ENCODE measurements at regions of chr4 and their contacts with region 1.

Region 1: DNA sequence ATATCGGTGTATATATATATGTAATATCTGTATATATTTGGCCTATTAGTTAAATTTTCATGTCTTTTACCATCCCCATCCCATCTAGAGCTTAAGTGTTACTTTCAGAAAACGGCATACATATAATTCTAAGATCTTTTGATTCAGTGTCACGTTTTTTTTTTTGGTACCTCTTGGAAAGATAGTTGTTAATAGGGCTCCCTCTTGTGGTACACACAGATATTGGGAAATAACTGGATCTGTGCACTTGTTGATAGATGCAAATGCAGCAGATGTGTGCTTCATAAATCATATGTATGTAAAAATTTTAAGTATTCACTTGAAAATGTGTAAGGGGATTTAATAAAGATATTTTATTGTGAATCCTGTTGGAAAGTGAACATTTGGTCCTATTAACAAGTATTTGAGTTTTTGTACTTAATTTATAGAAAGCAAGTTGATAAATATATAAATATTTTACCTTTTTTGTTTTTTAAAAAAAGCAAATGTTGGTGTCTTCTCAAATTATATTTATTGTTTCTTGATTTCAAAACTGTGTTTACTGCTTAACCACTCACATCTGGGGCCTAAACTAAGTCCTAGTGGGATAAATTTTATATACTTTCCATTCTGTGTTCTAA is 74.7 kb downstream of the PAQR3 start:
- DNase-seq: no peak
- H3K4me3 Mint-ChIP-seq: no peak overlapping the region
- H3K27ac Mint-ChIP-seq: no peak overlapping the region
- H3K4me1 Mint-ChIP-seq: no peaks in the 10 kb centered on the region
- H3K27me3 Mint-ChIP-seq: no peaks in the 10 kb centered on the region

Region 2: GRCh38 chr4:77959566-77960338 is 904.8 kb before region 1 on chr4:
- CTCF ChIA-PET with region 1: interaction called, 4 read pairs
- POLR2A ChIA-PET with region 1: no interaction called
- intact Hi-C with region 1: loop called (anchors 1 kb)
- DNase-seq: no peak
- H3K4me3 Mint-ChIP-seq: no peak overlapping the region
- H3K27ac Mint-ChIP-seq: no peak overlapping the region
- H3K4me1 Mint-ChIP-seq: peaks cover 8% of the 10 kb centered on the region
- H3K27me3 Mint-ChIP-seq: no peaks in the 10 kb centered on the region

Region 3: GRCh38 chr4:78056265-78057129 is 808.0 kb before region 1 on chr4:
- CTCF ChIA-PET with region 1: no interaction called
- POLR2A ChIA-PET with region 1: no interaction called
- intact Hi-C with region 1: loop called (anchors 2 kb)
- DNase-seq: peak; percentile 52
- H3K4me3 Mint-ChIP-seq: peak overlapping the region; percentile 53
- H3K27ac Mint-ChIP-seq: no peak overlapping the region
- H3K4me1 Mint-ChIP-seq: peaks cover 19% of the 10 kb centered on the region
- H3K27me3 Mint-ChIP-seq: peaks cover 46% of the 10 kb centered on the region

Region 4: DNA sequence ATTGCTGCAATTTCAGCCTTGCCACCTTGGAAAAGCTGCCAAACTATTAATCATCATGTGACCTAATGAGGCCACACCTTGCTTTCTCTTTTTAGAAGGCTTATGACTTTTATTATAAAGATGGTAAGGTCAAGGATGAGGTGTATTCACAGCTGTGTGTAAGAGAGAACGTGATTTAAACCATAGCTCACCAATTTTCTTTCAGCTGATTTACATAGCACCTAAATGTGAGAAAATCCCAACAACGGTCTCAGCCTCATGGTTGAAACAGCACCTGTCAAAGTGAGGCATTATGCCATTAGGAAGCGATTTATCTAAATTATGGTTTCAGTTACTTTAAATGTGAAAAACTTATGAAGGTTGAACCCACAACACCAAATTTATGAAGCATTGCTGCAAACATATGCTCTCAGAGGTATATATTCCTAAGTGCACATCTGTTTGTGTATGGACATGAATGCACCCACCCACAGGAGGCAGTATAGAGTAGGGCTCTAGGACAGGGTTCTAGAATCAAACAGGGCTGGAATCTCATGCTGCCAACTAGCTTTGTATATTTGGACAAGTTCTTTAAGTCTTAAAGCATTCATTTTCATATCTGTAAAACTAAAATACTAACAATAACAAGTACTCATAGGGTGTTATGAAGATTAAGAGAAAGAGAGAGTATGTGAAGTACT is 272.3 kb before region 1 on chr4:
- CTCF ChIA-PET with region 1: interaction called, 7 read pairs
- POLR2A ChIA-PET with region 1: no interaction called
- intact Hi-C with region 1: loop called (anchors 5 kb)
- DNase-seq: peak; percentile 12
- H3K4me3 Mint-ChIP-seq: no peak overlapping the region
- H3K27ac Mint-ChIP-seq: no peak overlapping the region
- H3K4me1 Mint-ChIP-seq: no peaks in the 10 kb centered on the region
- H3K27me3 Mint-ChIP-seq: no peaks in the 10 kb centered on the region

Region 5: DNA sequence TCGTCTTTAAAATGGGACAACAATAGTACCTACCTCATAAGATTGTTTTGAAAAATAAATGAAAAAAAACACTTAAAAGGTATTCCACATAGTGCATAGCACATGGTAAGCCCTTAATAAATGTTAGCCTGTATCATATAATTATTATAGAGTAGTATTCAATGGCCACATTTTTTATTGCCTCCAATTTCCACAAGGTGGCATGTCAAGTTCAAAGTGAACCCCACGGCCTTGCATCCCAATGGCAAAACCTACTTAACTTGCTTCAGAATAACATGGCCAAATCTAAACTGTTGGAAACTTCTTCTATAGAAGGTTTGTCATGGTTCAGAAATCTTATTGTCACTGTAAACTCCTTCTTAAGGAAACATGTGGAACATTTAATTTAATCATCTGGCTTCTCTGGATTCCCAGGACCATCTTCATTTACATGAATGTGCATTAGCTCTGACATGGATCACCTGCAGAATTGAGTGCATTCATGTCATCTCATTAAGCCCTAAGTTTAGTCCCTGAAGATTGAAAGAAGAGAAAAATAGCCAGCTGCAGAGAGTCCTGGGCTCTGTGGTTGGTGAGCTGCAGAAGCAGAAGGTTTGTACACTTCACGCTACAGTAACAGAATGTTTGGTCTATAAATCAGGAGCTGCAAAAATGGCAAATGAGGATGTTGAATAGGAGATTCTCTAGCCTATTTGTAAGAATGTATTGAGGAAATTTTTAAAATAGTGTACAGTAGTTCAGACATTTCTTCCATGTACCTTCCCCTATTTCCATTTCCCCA is 251.9 kb before region 1 on chr4:
- CTCF ChIA-PET with region 1: interaction called, 23 read pairs
- POLR2A ChIA-PET with region 1: no interaction called
- intact Hi-C with region 1: loop called (anchors 1 kb)
- DNase-seq: peak; percentile 15
- H3K4me3 Mint-ChIP-seq: no peak overlapping the region
- H3K27ac Mint-ChIP-seq: no peak overlapping the region
- H3K4me1 Mint-ChIP-seq: peaks cover 23% of the 10 kb centered on the region
- H3K27me3 Mint-ChIP-seq: no peaks in the 10 kb centered on the region

Region 6: DNA sequence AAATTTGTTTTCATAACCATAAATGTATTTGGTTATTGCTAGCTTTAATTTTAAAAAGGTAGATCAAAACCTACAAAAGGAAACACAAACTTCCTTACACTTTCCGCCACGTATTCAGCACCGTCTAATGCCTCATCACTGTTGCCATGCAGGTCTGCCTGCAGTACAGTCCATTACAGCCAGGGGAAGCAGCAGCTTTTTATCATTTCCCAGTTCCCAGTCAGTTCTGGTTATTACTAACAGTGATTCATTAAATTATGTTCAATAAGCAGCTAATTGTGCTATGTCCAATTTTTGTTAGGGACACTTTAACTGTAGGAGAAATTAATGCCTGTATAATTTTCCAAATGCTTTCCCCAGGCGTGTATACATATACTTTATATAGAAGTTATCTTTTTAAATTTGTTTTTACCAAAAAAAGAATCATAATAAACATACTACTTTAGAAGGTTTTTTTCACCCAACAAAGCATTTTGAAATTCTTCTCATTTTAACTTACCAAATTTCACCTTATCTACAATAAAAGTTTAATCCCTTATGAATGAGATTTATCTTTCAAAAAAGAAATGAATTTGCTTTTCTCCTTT is 219.7 kb before region 1 on chr4:
- CTCF ChIA-PET with region 1: interaction called, 5 read pairs
- POLR2A ChIA-PET with region 1: no interaction called
- intact Hi-C with region 1: loop called (anchors 1 kb)
- DNase-seq: peak; percentile 57
- H3K4me3 Mint-ChIP-seq: no peak overlapping the region
- H3K27ac Mint-ChIP-seq: no peak overlapping the region
- H3K4me1 Mint-ChIP-seq: no peaks in the 10 kb centered on the region
- H3K27me3 Mint-ChIP-seq: no peaks in the 10 kb centered on the region

Region 7: GRCh38 chr4:78775303-78776030 is 89.0 kb before region 1 on chr4:
- CTCF ChIA-PET with region 1: interaction called, 3 read pairs
- POLR2A ChIA-PET with region 1: no interaction called
- intact Hi-C with region 1: loop called (anchors 5 kb)
- DNase-seq: peak; percentile 90
- H3K4me3 Mint-ChIP-seq: peak overlapping the region; percentile 93
- H3K27ac Mint-ChIP-seq: peak overlapping the region; percentile 91
- H3K4me1 Mint-ChIP-seq: peaks cover 22% of the 10 kb centered on the region
- H3K27me3 Mint-ChIP-seq: no peaks in the 10 kb centered on the region